ENCODE measurements at regions of chr16 and their contacts with region 1.

Region 1: DNA sequence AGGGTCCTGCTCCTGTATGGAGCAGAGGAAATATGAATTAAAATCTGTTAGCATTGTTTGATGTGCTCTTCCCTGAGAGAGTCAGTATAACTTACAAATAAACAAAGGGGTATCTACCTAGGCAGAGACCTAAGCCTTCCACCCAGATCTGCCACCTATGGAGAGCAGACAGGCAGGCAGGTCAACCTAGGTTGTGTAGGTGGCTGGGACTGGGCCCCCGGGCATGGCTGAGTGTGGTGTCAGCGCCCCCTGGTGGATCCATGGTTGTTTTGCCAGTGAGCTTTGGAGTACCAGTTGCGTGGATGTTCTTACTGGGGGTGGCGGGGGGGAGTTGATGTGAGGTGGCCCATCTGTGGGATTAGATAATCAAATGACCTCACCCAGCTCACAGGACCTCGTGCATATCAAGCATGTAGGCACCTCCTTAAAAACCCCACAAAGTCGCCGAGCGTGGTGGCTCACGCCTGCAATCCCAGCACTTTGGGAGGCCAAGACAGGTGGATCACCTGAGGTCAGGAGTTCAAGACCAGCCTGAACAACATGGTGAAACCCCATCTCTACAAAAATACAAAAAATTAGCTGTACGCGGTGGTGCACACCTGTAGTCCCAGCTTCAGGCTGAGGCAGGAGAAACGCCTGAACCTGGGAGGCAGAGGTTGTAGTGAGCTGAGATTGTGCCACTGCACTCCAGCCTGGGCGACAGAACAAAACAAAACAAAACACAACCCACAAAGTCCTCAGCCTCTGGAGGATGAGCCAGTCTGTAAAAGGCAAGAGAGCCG is 17.6 kb downstream of the DUS2 start:
- DNase-seq: peak; percentile 47
- ATAC-seq: peak; percentile 97
- H3K4me3 ChIP-seq: no peak overlapping the region
- H3K27ac ChIP-seq: peak overlapping the region; percentile 4; the same call in 1 of the 2 replicates
- H3K4me1 ChIP-seq: peaks cover 17% of the 10 kb centered on the region
- H3K27me3 ChIP-seq: no peaks in the 10 kb centered on the region
- CTCF ChIP-seq: peak; percentile 87 to 96 (median 93)
- EP300 ChIP-seq: no peak
- POLR2A ChIP-seq: no peak
- RAD21 ChIP-seq: peak; percentile 95

Region 2: GRCh38 chr16:67183627-67184328 is 856.9 kb before region 1 on chr16 and contains the start of gene MATCAP1:
- CTCF ChIA-PET with region 1: no interaction called
- POLR2A ChIA-PET with region 1: no interaction called
- RAD21 ChIA-PET with region 1: no interaction called
- SMC1A ChIA-PET with region 1: no interaction called
- in situ Hi-C with region 1: no loop called
- intact Hi-C with region 1: no loop called
- DNase-seq: peak; percentile 91
- ATAC-seq: peak; percentile 96
- H3K4me3 ChIP-seq: peak within 1 kb of the TSS; percentile 76
- H3K27ac ChIP-seq: peak within 1 kb of the TSS; percentile 84
- H3K4me1 ChIP-seq: peaks cover 4% of the 10 kb centered on the region
- H3K27me3 ChIP-seq: peaks cover 0 to 3% of the 10 kb centered on the region in 2 experiments; a peak in 2 of 4 replicates
- CTCF ChIP-seq: no peak
- EP300 ChIP-seq: no peak
- POLR2A ChIP-seq: peak; percentile 76
- RAD21 ChIP-seq: no peak
- polyA plus RNA-seq, gene MATCAP1: 2.8 to 6.6 TPM

Region 3: DNA sequence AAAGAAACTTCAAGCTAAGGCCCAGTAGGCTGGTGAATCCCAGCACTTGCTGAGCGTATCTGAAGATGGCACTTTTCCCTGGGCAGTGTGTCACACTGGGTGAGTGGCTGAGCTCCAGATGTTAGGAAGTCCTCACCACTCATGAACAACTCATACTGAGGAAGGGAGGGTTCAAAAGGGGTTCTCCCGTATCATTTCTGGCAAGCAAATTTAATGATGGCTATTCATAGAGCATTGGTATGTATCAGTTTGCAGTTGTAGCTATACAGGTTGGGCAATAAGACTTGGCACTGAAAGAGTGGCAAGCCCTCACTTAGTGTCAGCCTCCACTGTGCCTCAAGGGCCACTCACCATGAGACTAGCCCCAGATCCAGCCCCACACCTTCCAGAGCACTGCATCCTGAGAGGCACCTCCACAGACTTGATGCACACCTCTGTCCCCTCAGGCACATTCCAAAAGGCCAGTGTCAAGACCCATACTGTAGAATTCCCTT is 332.3 kb before region 1 on chr16:
- CTCF ChIA-PET with region 1: no interaction called
- POLR2A ChIA-PET with region 1: no interaction called
- RAD21 ChIA-PET with region 1: no interaction called
- SMC1A ChIA-PET with region 1: no interaction called
- in situ Hi-C with region 1: no loop called
- intact Hi-C with region 1: no loop called
- DNase-seq: no peak
- ATAC-seq: no peak
- H3K4me3 ChIP-seq: no peak overlapping the region
- H3K27ac ChIP-seq: no peak overlapping the region
- H3K4me1 ChIP-seq: peaks cover 3% of the 10 kb centered on the region
- H3K27me3 ChIP-seq: no peaks in the 10 kb centered on the region
- CTCF ChIP-seq: no peak
- EP300 ChIP-seq: no peak
- POLR2A ChIP-seq: no peak
- RAD21 ChIP-seq: no peak

Region 4: DNA sequence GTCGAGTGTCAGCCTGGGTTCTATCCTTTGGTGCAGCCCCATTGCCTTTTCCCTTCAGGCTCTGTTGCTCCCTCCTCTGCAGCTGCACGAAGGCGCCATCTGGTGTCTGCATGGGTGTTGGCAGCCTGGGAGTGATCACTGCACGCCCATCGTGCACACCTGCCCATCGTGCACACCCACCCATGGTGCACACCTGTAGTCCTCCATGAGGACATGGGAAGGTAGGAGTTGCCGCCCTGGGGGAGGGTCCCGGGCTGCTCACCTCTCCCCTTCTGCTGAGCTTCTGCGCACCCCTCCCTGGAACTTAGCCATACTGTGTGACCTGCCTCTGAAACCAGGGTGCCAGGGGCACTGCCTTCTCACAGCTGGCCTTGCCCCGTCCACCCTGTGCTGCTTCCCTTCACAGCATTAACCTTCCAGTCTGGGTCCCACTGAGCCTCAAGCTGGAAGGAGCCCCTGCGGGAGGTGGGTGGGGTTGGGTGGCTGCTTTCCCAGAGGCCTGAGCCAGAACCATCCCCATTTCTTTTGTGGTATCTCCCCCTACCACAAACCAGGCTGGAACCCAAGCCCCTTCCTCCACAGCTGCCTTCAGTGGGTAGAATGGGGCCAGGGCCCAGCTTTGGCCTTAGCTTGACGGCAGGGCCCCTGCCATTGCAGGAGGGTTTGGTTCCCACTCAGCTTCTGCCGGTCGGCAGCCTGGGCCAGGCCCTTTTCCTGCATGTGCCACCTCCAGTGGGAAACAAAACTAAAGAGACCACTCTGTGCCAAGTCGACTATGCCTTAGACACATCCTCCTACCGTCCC is 111.9 kb before region 1 on chr16:
- CTCF ChIA-PET with region 1: interaction called, 10 read pairs
- POLR2A ChIA-PET with region 1: no interaction called
- RAD21 ChIA-PET with region 1: no interaction called
- SMC1A ChIA-PET with region 1: interaction called, 6 read pairs
- in situ Hi-C with region 1: no loop called
- intact Hi-C with region 1: no loop called
- DNase-seq: no peak
- ATAC-seq: peak; percentile 94
- H3K4me3 ChIP-seq: no peak overlapping the region
- H3K27ac ChIP-seq: no peak overlapping the region
- H3K4me1 ChIP-seq: no peaks in the 10 kb centered on the region; the same call in 1 of the 2 replicates
- H3K27me3 ChIP-seq: no peaks in the 10 kb centered on the region
- CTCF ChIP-seq: peak; percentile 93 to 98 (median 96)
- EP300 ChIP-seq: no peak
- POLR2A ChIP-seq: peak; percentile 77
- RAD21 ChIP-seq: peak; percentile 88

Region 5: DNA sequence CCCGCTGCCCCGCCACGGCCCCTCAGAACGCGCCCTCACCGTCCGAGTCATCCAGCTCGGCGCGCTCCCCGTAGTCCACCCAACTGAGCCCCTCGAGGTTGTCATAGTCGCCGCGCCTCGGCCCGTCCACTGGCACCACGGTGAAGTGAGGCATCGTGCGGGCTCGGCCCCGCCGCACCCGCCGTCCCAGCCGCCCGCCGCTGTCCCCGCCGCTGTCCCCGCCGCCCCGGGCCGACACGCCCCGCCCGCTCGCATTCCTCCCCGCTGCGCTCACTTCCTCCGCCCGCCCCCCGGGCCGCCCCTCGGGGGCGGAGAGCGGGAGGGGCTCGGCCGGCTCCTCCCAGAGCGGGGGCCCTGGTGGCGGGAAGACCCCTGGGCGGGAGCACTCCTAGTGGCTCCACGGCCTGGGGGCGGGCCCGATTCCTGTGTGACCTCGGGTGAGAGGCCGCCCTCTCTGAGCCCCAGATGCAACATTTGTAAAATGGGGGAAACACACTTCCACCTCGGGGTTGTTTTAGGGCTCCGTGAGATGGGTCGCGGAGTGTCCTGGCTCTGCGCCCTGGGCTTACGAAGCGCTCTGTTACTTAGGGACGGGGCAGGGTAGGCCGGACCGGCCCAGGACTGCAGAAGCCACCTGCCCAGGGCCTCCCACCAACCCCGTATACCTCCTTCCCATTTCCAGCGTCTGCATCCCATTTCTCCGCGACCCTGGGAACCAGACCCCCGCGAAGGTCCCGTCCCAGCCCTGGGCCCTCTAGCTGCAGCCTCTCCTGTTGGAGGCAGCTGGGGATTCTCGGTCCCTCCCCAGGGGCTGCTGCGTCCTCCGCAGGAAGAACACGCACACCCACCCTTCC is 72.1 kb before region 1 on chr16 and contains the start of gene SLC12A4:
- CTCF ChIA-PET with region 1: interaction called, 22 read pairs
- POLR2A ChIA-PET with region 1: no interaction called
- RAD21 ChIA-PET with region 1: interaction called, 8 read pairs
- SMC1A ChIA-PET with region 1: interaction called, 4 read pairs
- in situ Hi-C with region 1: no loop called
- intact Hi-C with region 1: loop called (anchors 2 kb)
- DNase-seq: no peak
- ATAC-seq: peak; percentile 88
- H3K4me3 ChIP-seq: peak within 1 kb of the TSS; percentile 96
- H3K27ac ChIP-seq: peak within 1 kb of the TSS; percentile 76
- H3K4me1 ChIP-seq: peaks cover 21% of the 10 kb centered on the region
- H3K27me3 ChIP-seq: no peaks in the 10 kb centered on the region
- CTCF ChIP-seq: no peak
- EP300 ChIP-seq: no peak
- POLR2A ChIP-seq: peak; percentile 76
- RAD21 ChIP-seq: no peak
- polyA plus RNA-seq, gene SLC12A4: 0.95 to 1.7 TPM

Region 6: GRCh38 chr16:68015396-68016105 is 25.1 kb before region 1 on chr16 and contains the start of gene DPEP2NB:
- CTCF ChIA-PET with region 1: interaction called, 12 read pairs
- POLR2A ChIA-PET with region 1: no interaction called
- RAD21 ChIA-PET with region 1: no interaction called
- SMC1A ChIA-PET with region 1: no interaction called
- in situ Hi-C with region 1: no loop called
- intact Hi-C with region 1: no loop called
- DNase-seq: no peak
- ATAC-seq: no peak
- H3K4me3 ChIP-seq: no peak within 1 kb of the TSS
- H3K27ac ChIP-seq: no peak within 1 kb of the TSS
- H3K4me1 ChIP-seq: no peaks in the 10 kb centered on the region
- H3K27me3 ChIP-seq: no peaks in the 10 kb centered on the region
- CTCF ChIP-seq: no peak
- EP300 ChIP-seq: no peak
- POLR2A ChIP-seq: no peak
- RAD21 ChIP-seq: no peak
- polyA plus RNA-seq, gene DPEP2NB: not detected

Region 7: DNA sequence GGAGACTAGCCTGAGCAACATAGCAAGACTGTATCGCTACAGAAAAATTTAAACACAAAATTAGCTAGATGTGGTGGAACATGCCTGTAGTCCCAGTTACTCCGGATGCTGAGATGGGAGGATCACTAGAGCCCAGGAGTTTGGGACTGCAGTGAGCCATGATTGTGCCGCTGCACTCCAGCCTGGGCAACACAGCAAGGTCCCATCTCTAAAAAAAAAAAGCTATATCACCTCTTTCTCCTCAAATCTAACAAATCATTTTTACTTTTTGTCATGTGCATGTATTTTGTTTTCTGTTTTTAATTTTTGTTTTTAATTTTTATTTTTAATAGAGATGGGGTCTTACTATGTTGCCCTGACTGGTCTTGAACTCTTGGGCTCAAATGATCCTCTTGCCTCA is 11.7 kb before region 1 on chr16:
- CTCF ChIA-PET with region 1: interaction called, 14 read pairs
- POLR2A ChIA-PET with region 1: no interaction called
- RAD21 ChIA-PET with region 1: no interaction called
- SMC1A ChIA-PET with region 1: interaction called, 9 read pairs
- in situ Hi-C with region 1: no loop called
- intact Hi-C with region 1: no loop called
- DNase-seq: no peak
- ATAC-seq: no peak
- H3K4me3 ChIP-seq: no peak overlapping the region
- H3K27ac ChIP-seq: no peak overlapping the region
- H3K4me1 ChIP-seq: no peaks in the 10 kb centered on the region
- H3K27me3 ChIP-seq: no peaks in the 10 kb centered on the region
- CTCF ChIP-seq: no peak
- EP300 ChIP-seq: no peak
- POLR2A ChIP-seq: no peak
- RAD21 ChIP-seq: no peak

Region 8: GRCh38 chr16:68074850-68075555 is 34.3 kb after region 1 on chr16:
- CTCF ChIA-PET with region 1: interaction called, 13 read pairs
- POLR2A ChIA-PET with region 1: interaction called, 3 read pairs
- RAD21 ChIA-PET with region 1: interaction called, 3 read pairs
- SMC1A ChIA-PET with region 1: interaction called, 5 read pairs
- in situ Hi-C with region 1: no loop called
- intact Hi-C with region 1: no loop called
- DNase-seq: peak; percentile 95
- ATAC-seq: peak; percentile 93
- H3K4me3 ChIP-seq: no peak overlapping the region
- H3K27ac ChIP-seq: peak overlapping the region; percentile 71
- H3K4me1 ChIP-seq: peaks cover 50% of the 10 kb centered on the region
- H3K27me3 ChIP-seq: no peaks in the 10 kb centered on the region
- CTCF ChIP-seq: no peak
- EP300 ChIP-seq: peak; percentile 69 to 92; a peak in 3 of 4 replicates
- POLR2A ChIP-seq: 0 out of 2 replicates have a peak, but pooled peaks have one; percentile 19
- RAD21 ChIP-seq: no peak

Region 9: GRCh38 chr16:68236137-68236825 is 195.6 kb after region 1 on chr16:
- CTCF ChIA-PET with region 1: no interaction called
- POLR2A ChIA-PET with region 1: no interaction called
- RAD21 ChIA-PET with region 1: no interaction called
- SMC1A ChIA-PET with region 1: no interaction called
- in situ Hi-C with region 1: no loop called
- intact Hi-C with region 1: no loop called
- DNase-seq: no peak
- ATAC-seq: no peak
- H3K4me3 ChIP-seq: peak overlapping the region; percentile 62; the same call in 1 of the 2 replicates
- H3K27ac ChIP-seq: no peak overlapping the region
- H3K4me1 ChIP-seq: peaks cover 11% of the 10 kb centered on the region
- H3K27me3 ChIP-seq: no peaks in the 10 kb centered on the region
- CTCF ChIP-seq: no peak
- EP300 ChIP-seq: no peak
- POLR2A ChIP-seq: no peak; the same call in 1 of the 2 replicates
- RAD21 ChIP-seq: no peak

Region 10: GRCh38 chr16:68257906-68258800 is 217.5 kb after region 1 on chr16:
- CTCF ChIA-PET with region 1: no interaction called
- POLR2A ChIA-PET with region 1: no interaction called
- RAD21 ChIA-PET with region 1: no interaction called
- SMC1A ChIA-PET with region 1: no interaction called
- in situ Hi-C with region 1: no loop called
- intact Hi-C with region 1: no loop called
- DNase-seq: no peak
- ATAC-seq: peak; percentile 66
- H3K4me3 ChIP-seq: no peak overlapping the region
- H3K27ac ChIP-seq: peak overlapping the region; percentile 35
- H3K4me1 ChIP-seq: peaks cover 22% of the 10 kb centered on the region
- H3K27me3 ChIP-seq: no peaks in the 10 kb centered on the region
- CTCF ChIP-seq: no peak
- EP300 ChIP-seq: no peak
- POLR2A ChIP-seq: no peak
- RAD21 ChIP-seq: no peak

Measured in GM12878 (cell line).